ENCODE measurements at regions of chr20 and their contacts with region 1.

Region 1: GRCh38 chr20:21395666-21396598 is 1.4 kb downstream of the NKX2-4 start:
- DNase-seq: peak in 8 of 9 experiments; percentile 11 to 86 (median 64)
- ATAC-seq: peak; percentile 89
- H3K4me3 ChIP-seq: no peak overlapping the region
- H3K4me3 Mint-ChIP-seq: peak overlapping the region; percentile 79
- H3K27ac ChIP-seq: no peak overlapping the region
- H3K27ac Mint-ChIP-seq: no peak overlapping the region
- H3K4me1 ChIP-seq: peaks cover 13% of the 10 kb centered on the region
- H3K4me1 Mint-ChIP-seq: peaks cover 23% of the 10 kb centered on the region
- H3K27me3 ChIP-seq: peaks cover 54 to 58% of the 10 kb centered on the region in 2 experiments
- H3K27me3 Mint-ChIP-seq: peaks cover 71% of the 10 kb centered on the region
- CTCF ChIP-seq: no peak

Region 2: DNA sequence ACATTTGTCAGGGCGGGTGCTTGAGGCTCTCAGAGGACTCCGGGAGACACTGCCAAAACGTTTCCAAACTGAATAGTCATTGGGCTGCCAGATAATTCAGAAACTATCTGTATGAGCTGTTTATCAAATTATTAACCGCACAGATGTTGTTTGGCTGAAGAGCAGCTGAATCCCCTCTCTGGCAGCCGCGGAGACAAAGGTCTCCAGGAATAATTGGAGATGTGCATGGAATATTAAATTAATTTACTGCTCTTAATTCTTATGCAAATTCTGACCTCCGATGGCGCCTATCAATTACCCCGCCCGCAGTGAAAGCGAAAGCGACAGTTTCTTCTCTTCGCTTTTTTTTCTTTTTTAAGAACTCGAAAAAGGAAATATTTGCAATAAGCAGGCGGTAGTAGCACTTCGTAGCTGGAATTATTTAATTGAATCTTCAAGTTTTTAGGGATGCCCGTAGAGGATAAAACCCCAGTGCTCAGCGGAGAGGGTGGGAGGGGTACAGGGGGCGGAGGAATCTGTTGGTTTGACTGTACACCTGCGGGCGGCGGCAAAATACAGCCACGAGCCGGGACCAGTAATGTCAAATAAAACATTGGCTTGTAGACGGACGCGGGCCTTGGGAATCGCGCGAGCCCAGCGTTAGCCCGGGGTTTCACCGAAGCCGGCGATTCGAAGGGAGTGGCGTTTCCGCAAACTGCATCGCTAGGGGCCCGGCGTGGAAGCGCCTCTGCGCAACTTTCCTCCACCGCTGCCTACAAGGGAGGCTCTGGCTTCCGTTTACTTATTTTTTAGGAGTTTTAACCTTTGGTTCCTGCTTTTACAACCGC is 296.0 kb before region 1 on chr20:
- CTCF ChIA-PET with region 1: no interaction called
- POLR2A ChIA-PET with region 1: no interaction called
- intact Hi-C with region 1: loop called (anchors 5 kb)
- DNase-seq: peak in 6 of 9 experiments; percentile 32 to 76 (median 52)
- ATAC-seq: peak; percentile 45
- H3K4me3 ChIP-seq: peak overlapping the region; percentile 66 to 71
- H3K4me3 Mint-ChIP-seq: peak overlapping the region; percentile 84
- H3K27ac ChIP-seq: peak overlapping the region; percentile 44 to 73
- H3K27ac Mint-ChIP-seq: peak overlapping the region; percentile 71
- H3K4me1 ChIP-seq: peaks cover 43% of the 10 kb centered on the region
- H3K4me1 Mint-ChIP-seq: peaks cover 40% of the 10 kb centered on the region
- H3K27me3 ChIP-seq: peaks cover 46 to 51% of the 10 kb centered on the region in 2 experiments
- H3K27me3 Mint-ChIP-seq: peaks cover 82% of the 10 kb centered on the region
- CTCF ChIP-seq: no peak